ENCODE measurements at regions of chr9 and their contacts with region 1.

Region 1: GRCh38 chr9:97570899-97571298 is 62.3 kb downstream of the TSTD2 start:
- DNase-seq: no peak
- H3K4me3 Mint-ChIP-seq: no peak overlapping the region
- H3K27ac Mint-ChIP-seq: no peak overlapping the region
- H3K4me1 Mint-ChIP-seq: peaks cover 16% of the 10 kb centered on the region
- H3K27me3 Mint-ChIP-seq: no peaks in the 10 kb centered on the region

Region 2: DNA sequence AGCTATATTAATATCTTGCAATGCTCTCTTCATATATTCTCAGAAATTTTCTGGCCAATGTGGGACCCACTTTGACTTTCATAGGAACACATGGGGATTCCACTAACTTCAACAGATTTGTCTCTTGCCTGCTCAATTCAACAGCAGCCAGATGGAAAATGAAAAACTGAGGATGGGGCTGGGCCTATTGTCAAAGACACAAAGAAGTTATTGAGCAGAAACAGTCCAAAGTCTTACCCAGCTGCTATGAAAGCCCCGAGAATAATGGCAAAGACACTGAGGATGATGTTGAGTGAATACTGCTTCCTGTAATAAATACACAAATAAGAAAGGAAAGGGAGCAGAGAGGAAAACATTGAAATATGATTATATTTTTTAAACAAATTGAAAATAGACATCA is 1220.0 kb before region 1 on chr9:
- CTCF ChIA-PET with region 1: no interaction called
- intact Hi-C with region 1: loop called (anchors 10 kb)
- DNase-seq: no peak
- H3K4me3 Mint-ChIP-seq: no peak overlapping the region
- H3K27ac Mint-ChIP-seq: no peak overlapping the region
- H3K4me1 Mint-ChIP-seq: no peaks in the 10 kb centered on the region
- H3K27me3 Mint-ChIP-seq: no peaks in the 10 kb centered on the region

Measured in activated naive CD4-positive, alpha-beta T cell treated with anti-CD3 and anti-CD28 coated beads for 36 hours (primary cell).